Panc1 (cell line): ENCODE measurements at regions of chr5 and their contacts with region 1.

Region 1: GRCh38 chr5:112729630-112730029 is 8.1 kb upstream of the APC start:
- DNase-seq: no peak
- ATAC-seq: no peak
- H3K4me3 ChIP-seq: no peak overlapping the region
- H3K27ac ChIP-seq: no peak overlapping the region
- H3K4me1 ChIP-seq: no peaks in the 10 kb centered on the region; the same call in 1 of the 2 replicates
- H3K27me3 ChIP-seq: no peaks in the 10 kb centered on the region
- CTCF ChIP-seq: no peak

Region 2: DNA sequence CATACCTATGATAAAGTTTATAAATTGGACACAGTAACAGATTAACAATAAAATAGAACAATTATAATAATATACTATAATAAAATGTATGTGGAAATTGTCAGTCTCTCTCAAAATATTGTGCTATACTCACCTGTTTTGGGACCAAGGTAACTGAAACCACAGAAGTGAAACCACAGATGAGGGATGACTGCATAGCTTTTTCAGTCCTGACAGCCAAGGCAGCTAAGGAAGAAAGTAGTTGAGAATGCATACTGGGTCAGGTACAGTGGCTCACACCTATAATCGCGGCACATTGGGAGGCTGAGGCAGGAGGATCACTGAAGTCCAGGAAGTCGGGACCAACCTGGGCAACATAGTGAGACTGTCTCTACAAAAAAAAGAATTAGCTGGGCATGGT is 140.3 kb after region 1 on chr5:
- CTCF ChIA-PET with region 1: interaction called, 12 read pairs
- POLR2A ChIA-PET with region 1: no interaction called
- in situ Hi-C with region 1: no loop called
- intact Hi-C with region 1: no loop called
- DNase-seq: no peak
- ATAC-seq: no peak
- H3K4me3 ChIP-seq: no peak overlapping the region
- H3K27ac ChIP-seq: no peak overlapping the region
- H3K4me1 ChIP-seq: no peaks in the 10 kb centered on the region
- H3K27me3 ChIP-seq: no peaks in the 10 kb centered on the region
- CTCF ChIP-seq: no peak